ENCODE measurements at regions of chr7 and their contacts with region 1.

Region 1: GRCh38 chr7:44797329-44798251 is 1.1 kb downstream of the PPIA start:
- DNase-seq: peak; percentile 73 to 95 (median 90)

Region 2: DNA sequence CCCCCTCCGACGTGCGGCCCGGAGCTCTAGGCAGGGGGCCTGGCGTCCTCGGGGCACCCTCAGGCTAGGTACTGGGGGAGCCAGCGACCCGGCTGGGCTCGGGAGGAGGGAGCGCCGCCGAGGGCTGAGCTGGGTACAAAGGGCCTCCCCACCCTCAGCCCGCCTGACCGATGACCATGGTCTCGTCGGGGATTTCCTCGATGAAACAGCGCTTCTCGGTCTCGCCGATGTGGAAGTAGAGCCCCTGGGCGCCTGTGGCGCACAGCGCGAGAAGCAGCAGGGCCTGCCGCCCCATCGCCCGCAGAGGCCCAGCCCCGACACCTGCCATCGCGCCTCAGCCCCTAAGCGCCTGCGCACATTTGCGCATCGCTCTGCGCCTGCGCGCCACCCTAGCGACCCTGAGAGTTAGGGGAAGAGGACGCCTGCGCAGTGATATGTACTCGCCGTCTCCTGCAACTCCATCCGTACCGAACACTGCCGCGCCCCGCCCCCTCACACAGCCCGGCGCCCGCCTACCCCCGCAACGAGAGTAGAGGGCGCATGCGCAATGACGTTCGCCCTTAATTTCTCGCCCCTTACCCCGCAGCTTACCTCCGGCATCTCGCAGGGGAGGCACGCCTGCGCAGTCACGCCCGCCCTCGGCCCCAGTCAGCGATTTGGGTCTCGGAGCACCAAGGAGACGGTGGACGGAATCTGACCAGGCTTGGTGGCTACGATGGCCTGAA is 215.5 kb before region 1 on chr7 and contains the start of gene TMED4:
- intact Hi-C with region 1: loop called (anchors 2 kb)
- DNase-seq: peak; percentile 96 to 100 (median 99)

Region 3: GRCh38 chr7:44748045-44748947 is 49.3 kb before region 1 on chr7 and contains the start of gene ZMIZ2:
- intact Hi-C with region 1: loop called (anchors 2 kb)
- DNase-seq: peak; percentile 81 to 99 (median 97)

Region 4: GRCh38 chr7:44824894-44825526 is 27.4 kb after region 1 on chr7:
- intact Hi-C with region 1: no loop called
- DNase-seq: no peak

Region 5: DNA sequence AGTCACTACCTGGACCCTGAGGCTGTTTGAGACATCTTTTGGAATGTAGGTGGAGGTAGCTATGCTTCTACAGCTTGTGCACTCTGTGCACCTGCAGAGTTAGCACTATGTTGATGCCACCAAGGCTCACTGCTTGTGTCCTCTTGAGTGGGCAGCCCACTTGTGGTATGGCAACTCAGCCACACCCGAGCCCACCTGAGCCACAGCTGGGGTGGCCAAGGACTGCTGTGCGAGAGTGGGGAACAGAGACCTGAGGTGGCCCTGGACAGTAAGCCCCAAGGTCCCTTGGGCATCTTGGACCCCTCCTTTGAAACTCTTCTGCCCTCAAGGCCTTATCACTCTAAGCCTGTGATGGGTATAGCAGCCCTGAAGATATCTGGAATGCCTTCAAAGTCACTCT is 155.6 kb after region 1 on chr7:
- intact Hi-C with region 1: no loop called
- DNase-seq: peak in 2 of 42 donors; percentile 29 to 33

Measured in head of caudate nucleus (tissue), 42 donors.